ENCODE measurements at regions of chr16 and their contacts with region 1.

Region 1: DNA sequence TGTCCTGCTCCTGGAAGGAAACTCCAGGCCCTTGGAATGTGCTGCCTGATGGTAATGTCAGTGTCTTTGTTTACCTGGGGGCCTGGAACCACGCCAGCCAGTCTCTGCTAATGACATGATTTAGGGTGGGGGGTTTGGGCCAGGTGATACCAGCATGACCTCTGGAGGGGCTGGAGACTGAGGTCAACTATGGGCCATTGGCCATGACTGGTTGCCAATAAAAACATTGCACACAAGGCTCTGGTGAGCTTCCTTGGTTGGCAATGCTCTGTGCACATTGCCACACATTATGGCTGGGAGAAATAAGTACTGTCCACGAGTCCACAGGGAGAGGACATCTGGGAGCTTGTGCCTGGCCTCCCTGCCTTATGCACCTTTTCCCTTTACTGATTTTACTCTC is 52.5 kb downstream of the LITAF start:
- DNase-seq: no peak
- H3K4me3 ChIP-seq: no peak overlapping the region
- H3K27ac ChIP-seq: peak overlapping the region in 1 of 4 donors; percentile 55
- H3K4me1 ChIP-seq: peaks cover 0 to 20% (median 0%) of the 10 kb centered on the region in 3 donors
- H3K27me3 ChIP-seq: no peaks in the 10 kb centered on the region
- CTCF ChIP-seq: no peak
- POLR2A ChIP-seq: no peak

Region 2: DNA sequence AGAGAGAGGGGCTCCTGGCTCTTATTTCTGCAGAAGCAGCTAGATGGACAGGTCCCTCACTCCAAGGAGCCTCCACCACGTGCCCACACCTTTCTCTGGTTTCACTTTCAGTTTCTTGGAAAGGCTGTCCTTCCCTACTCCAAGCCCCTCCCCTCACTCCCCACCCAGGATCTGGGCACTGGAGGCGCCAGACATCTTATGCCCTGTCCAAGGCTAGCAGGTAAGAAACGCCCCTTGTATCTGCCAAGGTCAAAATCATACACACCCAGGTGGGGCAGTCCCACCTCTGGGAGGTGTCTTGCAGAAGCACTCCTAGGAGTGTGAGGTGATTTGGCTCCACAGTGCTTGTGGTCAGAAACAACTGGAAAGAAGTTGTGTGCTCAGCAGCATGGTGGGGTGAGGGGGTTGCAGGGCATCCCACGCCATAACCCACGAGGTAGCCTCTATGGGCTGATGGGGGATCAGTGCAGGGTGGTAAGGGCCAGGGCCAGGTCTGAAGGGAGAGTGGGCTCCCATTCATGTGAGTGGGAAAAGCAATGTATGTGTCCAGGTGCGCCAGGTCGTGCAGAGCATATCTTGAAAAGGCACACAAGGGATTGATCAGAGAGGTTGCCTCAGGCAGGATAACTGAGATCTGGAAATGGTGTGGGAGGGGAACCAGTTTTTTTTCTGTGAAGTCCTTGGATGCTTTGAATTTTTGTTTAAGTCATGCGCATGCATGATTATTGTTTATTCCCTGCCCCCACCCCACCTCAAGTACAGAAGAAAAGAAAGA is 221.4 kb before region 1 on chr16:
- intact Hi-C with region 1: no loop called
- DNase-seq: no peak
- H3K4me3 ChIP-seq: peak overlapping the region in 1 of 4 donors; percentile 23
- H3K27ac ChIP-seq: peak overlapping the region in 1 of 4 donors; percentile 5
- H3K4me1 ChIP-seq: peaks cover 0 to 16% (median 11%) of the 10 kb centered on the region in 3 donors
- H3K27me3 ChIP-seq: no peaks in the 10 kb centered on the region
- CTCF ChIP-seq: no peak
- POLR2A ChIP-seq: no peak

Region 3: GRCh38 chr16:11639925-11640899 is 106.0 kb after region 1 on chr16:
- intact Hi-C with region 1: loop called (anchors 5 kb)
- DNase-seq: no peak
- H3K4me3 ChIP-seq: peak overlapping the region in 1 of 4 donors; percentile 25
- H3K27ac ChIP-seq: peak overlapping the region; percentile 80 to 95 (median 89)
- H3K4me1 ChIP-seq: peaks cover 12 to 40% (median 19%) of the 10 kb centered on the region in 3 donors
- H3K27me3 ChIP-seq: no peaks in the 10 kb centered on the region
- CTCF ChIP-seq: peak in 1 of 6 experiments; percentile 17
- POLR2A ChIP-seq: peak in 2 of 4 donors; percentile 42 to 68

Measured in esophagus squamous epithelium (tissue), 5 donors.